Caco-2 (cell line): ENCODE measurements at regions of chr1 and their contacts with region 1.

Region 1: GRCh38 chr1:229298887-229299503 is 28.1 kb downstream of the RAB4A start:
- DNase-seq: peak; percentile 84 to 88
- H3K4me3 ChIP-seq: no peak overlapping the region
- H3K4me3 Mint-ChIP-seq: peak overlapping the region; percentile 39
- H3K27ac Mint-ChIP-seq: peak overlapping the region; percentile 90
- H3K4me1 ChIP-seq: peaks cover 49% of the 10 kb centered on the region
- H3K4me1 Mint-ChIP-seq: peaks cover 34% of the 10 kb centered on the region
- H3K27me3 ChIP-seq: no peaks in the 10 kb centered on the region
- H3K27me3 Mint-ChIP-seq: no peaks in the 10 kb centered on the region
- CTCF ChIP-seq: no peak

Region 2: DNA sequence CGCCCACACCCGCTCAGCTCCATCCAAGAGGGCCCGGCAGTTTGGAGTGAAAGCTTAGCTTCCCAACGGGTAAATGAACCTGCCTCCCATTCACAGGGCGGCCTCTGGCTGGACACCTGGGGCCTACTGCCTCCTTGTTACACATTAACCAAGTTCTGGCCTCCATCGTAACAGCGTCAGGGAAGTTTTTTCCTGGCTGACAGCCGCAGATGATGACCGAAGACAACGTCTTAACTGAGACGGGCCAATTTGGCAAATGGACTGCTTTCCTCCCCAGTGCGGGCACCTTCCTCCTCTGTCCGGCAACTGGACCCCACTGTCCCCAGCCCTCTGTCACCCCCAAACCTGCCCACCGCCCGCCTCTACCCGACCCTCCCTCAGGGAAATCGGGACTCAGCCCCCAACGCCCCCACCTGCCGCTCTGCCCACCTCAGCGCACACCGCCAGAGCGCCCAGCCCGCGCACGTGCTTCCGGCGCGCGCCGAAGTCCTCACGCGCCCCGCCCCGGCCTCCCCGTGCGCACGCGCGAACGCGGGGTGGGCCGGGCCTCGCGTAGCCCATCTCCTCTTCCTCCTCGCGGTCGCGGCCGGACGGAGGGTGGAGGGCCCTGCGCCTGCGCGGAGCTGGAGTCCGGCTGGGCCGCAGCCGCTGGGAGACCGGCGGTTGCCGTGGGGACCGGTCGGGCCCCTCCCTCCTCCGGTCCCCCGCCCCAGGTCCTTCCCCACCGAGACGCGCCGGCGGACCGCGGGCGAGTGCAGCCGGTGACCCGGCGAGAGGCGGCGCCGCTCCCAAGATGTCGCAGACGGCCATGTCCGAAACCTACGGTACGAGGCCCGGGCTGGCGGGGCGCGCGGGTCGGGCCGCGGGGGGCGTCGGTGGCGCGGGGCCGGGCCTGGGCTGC is 28.2 kb before region 1 on chr1 and contains the start of gene RAB4A:
- CTCF ChIA-PET with region 1: interaction called, 4 read pairs
- POLR2A ChIA-PET with region 1: interaction called, 5 read pairs
- intact Hi-C with region 1: loop called (anchors 1 kb)
- DNase-seq: peak; percentile 92 to 96
- H3K4me3 ChIP-seq: peak within 1 kb of the TSS; percentile 77
- H3K4me3 Mint-ChIP-seq: peak within 1 kb of the TSS; percentile 88
- H3K27ac Mint-ChIP-seq: peak within 1 kb of the TSS; percentile 92
- H3K4me1 ChIP-seq: peaks cover 31% of the 10 kb centered on the region
- H3K4me1 Mint-ChIP-seq: peaks cover 17% of the 10 kb centered on the region
- H3K27me3 ChIP-seq: no peaks in the 10 kb centered on the region
- H3K27me3 Mint-ChIP-seq: no peaks in the 10 kb centered on the region
- CTCF ChIP-seq: no peak
- total RNA-seq, gene RAB4A: 98.9 and 111 TPM in 2 replicates

Region 3: DNA sequence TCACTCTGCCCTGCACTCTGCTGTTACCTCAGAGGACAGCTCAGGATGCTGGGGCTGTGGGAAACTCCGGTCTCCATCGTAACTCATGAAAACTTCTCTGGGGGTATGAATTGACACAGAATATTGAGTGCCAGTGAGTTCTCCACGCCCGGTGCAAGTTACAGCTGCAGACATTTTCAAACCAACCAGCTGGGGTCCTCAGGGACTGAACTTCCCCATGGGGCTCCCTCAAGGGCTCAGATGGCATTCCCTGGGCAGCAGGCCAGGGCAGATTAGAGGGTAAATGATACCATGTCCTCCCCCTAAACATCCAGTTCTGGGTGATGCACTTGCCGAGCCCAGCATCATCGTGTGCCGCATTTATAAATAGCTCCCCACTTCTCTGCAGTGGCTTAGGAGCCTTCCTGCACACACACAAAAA is 71.6 kb after region 1 on chr1:
- CTCF ChIA-PET with region 1: no interaction called
- POLR2A ChIA-PET with region 1: no interaction called
- intact Hi-C with region 1: no loop called
- DNase-seq: no peak
- H3K4me3 ChIP-seq: no peak overlapping the region
- H3K4me3 Mint-ChIP-seq: no peak overlapping the region
- H3K27ac Mint-ChIP-seq: no peak overlapping the region
- H3K4me1 ChIP-seq: no peaks in the 10 kb centered on the region
- H3K4me1 Mint-ChIP-seq: no peaks in the 10 kb centered on the region
- H3K27me3 ChIP-seq: no peaks in the 10 kb centered on the region; the same call in 1 of the 2 replicates
- H3K27me3 Mint-ChIP-seq: peaks cover 9% of the 10 kb centered on the region
- CTCF ChIP-seq: no peak

Region 4: GRCh38 chr1:229879746-229880145 is 580.8 kb after region 1 on chr1:
- CTCF ChIA-PET with region 1: no interaction called
- POLR2A ChIA-PET with region 1: no interaction called
- intact Hi-C with region 1: no loop called
- DNase-seq: no peak
- H3K4me3 ChIP-seq: no peak overlapping the region
- H3K4me3 Mint-ChIP-seq: no peak overlapping the region
- H3K27ac Mint-ChIP-seq: no peak overlapping the region
- H3K4me1 ChIP-seq: no peaks in the 10 kb centered on the region
- H3K4me1 Mint-ChIP-seq: no peaks in the 10 kb centered on the region
- H3K27me3 ChIP-seq: no peaks in the 10 kb centered on the region; the same call in 1 of the 2 replicates
- H3K27me3 Mint-ChIP-seq: peaks cover 8% of the 10 kb centered on the region
- CTCF ChIP-seq: no peak